Caco-2 (cell line): ENCODE measurements at regions of chr1 and their contacts with region 1.

Region 1: GRCh38 chr1:60848583-60849188 is 233.7 kb upstream of the NFIA start:
- DNase-seq: peak in 1 of 2 experiments; percentile 13
- H3K4me3 ChIP-seq: no peak overlapping the region
- H3K4me3 Mint-ChIP-seq: no peak overlapping the region
- H3K27ac Mint-ChIP-seq: no peak overlapping the region
- H3K4me1 ChIP-seq: no peaks in the 10 kb centered on the region
- H3K4me1 Mint-ChIP-seq: no peaks in the 10 kb centered on the region
- H3K27me3 ChIP-seq: no peaks in the 10 kb centered on the region
- H3K27me3 Mint-ChIP-seq: peaks cover 13% of the 10 kb centered on the region
- CTCF ChIP-seq: peak; percentile 32 to 38

Region 2: DNA sequence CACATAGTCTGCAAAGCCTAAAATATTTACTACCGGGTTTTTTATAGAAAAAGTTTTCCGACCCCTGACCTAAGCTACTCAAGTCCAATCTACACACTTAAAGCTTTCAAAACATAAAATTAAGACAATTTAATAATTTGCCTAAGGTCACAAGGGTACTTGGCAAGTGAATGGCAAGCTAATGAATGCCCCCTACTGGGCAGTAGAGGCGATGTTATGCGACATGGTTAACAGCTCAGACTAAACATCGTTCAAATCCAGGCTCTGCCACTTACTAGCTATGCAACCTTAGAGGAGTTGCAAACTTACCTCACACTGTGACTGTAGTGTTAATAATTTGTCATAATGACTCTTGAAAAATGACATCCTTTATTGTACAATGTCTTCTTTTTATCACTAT is 83.5 kb before region 1 on chr1:
- CTCF ChIA-PET with region 1: no interaction called
- POLR2A ChIA-PET with region 1: no interaction called
- intact Hi-C with region 1: no loop called
- DNase-seq: peak in 1 of 2 experiments; percentile 15
- H3K4me3 ChIP-seq: no peak overlapping the region
- H3K4me3 Mint-ChIP-seq: no peak overlapping the region
- H3K27ac Mint-ChIP-seq: no peak overlapping the region
- H3K4me1 ChIP-seq: no peaks in the 10 kb centered on the region
- H3K4me1 Mint-ChIP-seq: no peaks in the 10 kb centered on the region
- H3K27me3 ChIP-seq: no peaks in the 10 kb centered on the region
- H3K27me3 Mint-ChIP-seq: peaks cover 1% of the 10 kb centered on the region
- CTCF ChIP-seq: peak; percentile 38 to 46

Region 3: DNA sequence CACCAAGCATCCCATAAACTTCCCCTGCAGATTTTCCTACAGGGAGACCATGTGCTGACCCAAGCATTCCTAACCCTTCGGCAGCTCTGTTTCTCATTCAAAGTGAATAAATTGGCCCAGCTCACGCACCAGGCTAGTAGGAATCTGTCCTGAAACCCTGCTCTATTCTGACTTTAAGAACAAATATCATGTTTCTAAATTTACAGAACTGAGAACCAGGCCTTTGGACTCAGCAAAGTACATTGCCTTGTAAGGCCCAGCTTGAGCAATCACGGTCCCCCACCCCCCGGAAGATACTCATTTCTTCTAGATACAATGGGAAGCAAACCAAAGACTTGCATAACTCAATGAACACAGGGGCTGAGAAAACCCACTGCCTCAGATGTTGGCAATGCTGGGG is 73.6 kb after region 1 on chr1:
- CTCF ChIA-PET with region 1: no interaction called
- POLR2A ChIA-PET with region 1: no interaction called
- intact Hi-C with region 1: no loop called
- DNase-seq: no peak
- H3K4me3 ChIP-seq: no peak overlapping the region
- H3K4me3 Mint-ChIP-seq: no peak overlapping the region
- H3K27ac Mint-ChIP-seq: no peak overlapping the region
- H3K4me1 ChIP-seq: no peaks in the 10 kb centered on the region
- H3K4me1 Mint-ChIP-seq: peaks cover 9% of the 10 kb centered on the region
- H3K27me3 ChIP-seq: no peaks in the 10 kb centered on the region
- H3K27me3 Mint-ChIP-seq: no peaks in the 10 kb centered on the region
- CTCF ChIP-seq: no peak

Region 4: DNA sequence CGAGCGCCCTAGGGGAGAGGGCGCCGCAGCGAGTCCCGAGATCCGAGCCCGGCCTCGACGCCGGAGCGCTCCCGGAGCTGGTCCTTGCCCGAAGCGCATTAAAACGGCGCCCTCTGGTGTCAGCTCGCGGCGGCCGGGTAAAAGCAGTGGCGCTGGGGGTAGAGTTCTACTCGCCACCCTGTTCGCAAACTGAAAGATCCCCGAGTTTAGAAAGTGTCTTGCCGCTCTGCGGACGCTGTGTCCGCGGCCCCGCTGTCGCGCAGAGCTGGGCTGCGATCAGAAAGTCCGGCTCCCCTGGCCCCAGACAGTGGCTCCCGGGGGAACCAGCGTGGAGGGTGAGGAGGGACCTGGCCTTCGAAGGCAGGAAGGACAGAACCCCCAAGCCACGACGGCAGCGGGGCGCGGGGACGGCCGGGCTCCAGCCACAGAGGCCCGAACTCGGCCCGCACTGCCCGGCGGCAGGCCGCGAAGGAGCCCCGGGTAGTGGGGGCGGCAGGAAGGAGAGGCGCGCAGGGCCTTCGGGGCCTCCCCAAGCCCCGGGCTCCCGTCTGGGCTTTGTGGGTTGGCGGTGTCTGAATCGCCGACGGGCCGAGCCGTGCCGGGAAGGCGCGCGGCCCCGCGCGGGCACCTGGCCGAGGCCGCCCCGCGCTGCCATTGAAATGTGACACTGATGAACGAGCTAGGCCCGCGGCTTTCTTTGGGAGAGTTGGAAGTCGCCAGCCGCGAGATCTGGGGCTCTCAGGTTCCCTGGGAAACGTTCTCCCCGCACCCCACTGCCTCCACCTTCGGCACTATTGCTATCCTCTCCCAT is 194.5 kb after region 1 on chr1:
- CTCF ChIA-PET with region 1: no interaction called
- POLR2A ChIA-PET with region 1: no interaction called
- intact Hi-C with region 1: loop called (anchors 2 kb)
- DNase-seq: peak in 1 of 2 experiments; percentile 32
- H3K4me3 ChIP-seq: no peak overlapping the region
- H3K4me3 Mint-ChIP-seq: no peak overlapping the region
- H3K27ac Mint-ChIP-seq: no peak overlapping the region
- H3K4me1 ChIP-seq: no peaks in the 10 kb centered on the region
- H3K4me1 Mint-ChIP-seq: no peaks in the 10 kb centered on the region
- H3K27me3 ChIP-seq: no peaks in the 10 kb centered on the region
- H3K27me3 Mint-ChIP-seq: peaks cover 5% of the 10 kb centered on the region
- CTCF ChIP-seq: peak in 1 of 2 experiments; percentile 45